Activated T-helper 1 cell treated with anti-CD3 and anti-CD28 coated beads, Interleukin-12 subunit alpha, Interleukin-12 subunit beta, Interleukin-2, Interleukin-4 antibody, amounts not matched to agents 30 ng/mL and 10 ng/mL and 1 ng/mL, durations not matched to agents 14 hours and 24 hours and 36 hours (primary cell): ENCODE measurements at regions of chr3 and their contacts with region 1.

Region 1: DNA sequence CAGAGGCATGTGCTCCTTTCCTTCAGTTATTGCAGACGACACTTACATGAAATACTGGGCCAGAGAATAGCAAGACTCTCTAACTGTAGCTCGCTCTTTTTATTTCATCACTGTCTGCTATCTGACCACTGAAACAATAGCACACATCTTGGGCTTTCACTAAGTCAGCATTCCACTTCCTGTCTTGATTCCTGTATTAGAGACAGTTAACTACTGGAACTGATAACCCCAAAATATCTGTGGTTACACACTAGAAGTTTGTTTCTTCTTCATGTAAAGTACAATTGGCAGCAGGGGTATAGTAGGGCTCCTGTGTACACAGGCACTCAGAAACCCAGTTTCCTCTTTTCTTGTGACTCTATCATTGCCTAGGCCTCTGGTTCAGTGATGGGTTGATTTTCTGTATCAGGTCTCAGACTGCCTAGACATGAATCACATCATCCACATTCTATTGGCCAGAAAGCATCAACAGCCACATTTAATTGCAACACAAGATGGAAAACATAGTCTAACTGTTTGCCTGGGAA is 230.2 kb upstream of the CD96 start:
- DNase-seq: no peak
- H3K4me3 Mint-ChIP-seq: peak overlapping the region; percentile 45
- H3K27ac Mint-ChIP-seq: peak overlapping the region; percentile 92
- H3K4me1 Mint-ChIP-seq: no peaks in the 10 kb centered on the region
- H3K27me3 Mint-ChIP-seq: no peaks in the 10 kb centered on the region

Region 2: DNA sequence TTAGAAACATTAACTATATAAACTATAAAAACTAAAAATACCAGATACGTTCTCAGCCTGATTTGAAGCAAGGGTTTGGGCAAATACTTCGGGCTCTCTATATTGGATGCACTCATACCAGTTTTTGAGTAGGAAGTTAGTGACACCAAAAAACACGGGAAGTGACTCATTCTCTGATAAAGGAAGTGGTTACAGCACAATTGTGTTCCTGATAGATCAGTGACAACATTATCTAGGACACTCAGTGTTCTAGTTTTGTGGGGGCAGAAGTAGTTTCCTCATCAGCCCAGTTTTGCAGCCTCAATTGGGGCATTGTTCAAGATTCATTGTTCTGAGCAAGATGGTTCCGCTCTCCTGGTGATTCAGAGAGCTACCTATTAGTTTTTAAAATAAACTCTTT is 1504.8 kb before region 1 on chr3:
- intact Hi-C with region 1: loop called (anchors 10 kb)
- DNase-seq: peak; percentile 30
- H3K4me3 Mint-ChIP-seq: peak overlapping the region; percentile 35
- H3K27ac Mint-ChIP-seq: peak overlapping the region; percentile 67
- H3K4me1 Mint-ChIP-seq: peaks cover 39% of the 10 kb centered on the region
- H3K27me3 Mint-ChIP-seq: peaks cover 8% of the 10 kb centered on the region

Region 3: DNA sequence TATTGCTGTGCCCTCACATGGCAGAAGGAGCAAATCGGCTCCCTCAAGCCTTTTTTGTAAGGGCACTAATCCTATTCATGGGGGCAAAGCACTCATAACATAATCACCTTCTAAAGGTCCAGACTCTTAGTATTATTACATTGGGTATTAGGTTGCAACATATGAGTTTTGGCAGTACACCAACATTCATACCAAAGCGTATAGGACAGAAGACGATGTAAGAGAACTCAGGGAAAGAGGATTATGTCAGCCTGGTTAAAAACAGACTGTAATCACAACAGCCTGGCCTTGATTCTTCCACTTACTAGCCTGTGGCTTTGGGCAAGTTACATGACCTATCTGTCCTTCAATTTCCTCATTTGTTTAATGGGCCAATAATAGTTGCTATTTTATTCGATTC is 1068.7 kb before region 1 on chr3:
- intact Hi-C with region 1: no loop called
- DNase-seq: no peak
- H3K4me3 Mint-ChIP-seq: no peak overlapping the region
- H3K27ac Mint-ChIP-seq: no peak overlapping the region
- H3K4me1 Mint-ChIP-seq: no peaks in the 10 kb centered on the region
- H3K27me3 Mint-ChIP-seq: no peaks in the 10 kb centered on the region

Region 4: GRCh38 chr3:111238885-111239284 is 72.9 kb before region 1 on chr3:
- intact Hi-C with region 1: loop called (anchors 1 kb)
- DNase-seq: peak; percentile 48
- H3K4me3 Mint-ChIP-seq: peak overlapping the region; percentile 69
- H3K27ac Mint-ChIP-seq: peak overlapping the region; percentile 76
- H3K4me1 Mint-ChIP-seq: peaks cover 49% of the 10 kb centered on the region
- H3K27me3 Mint-ChIP-seq: no peaks in the 10 kb centered on the region

Region 5: GRCh38 chr3:111326144-111326995 is 14.6 kb after region 1 on chr3:
- intact Hi-C with region 1: loop called (anchors 1 kb)
- DNase-seq: no peak
- H3K4me3 Mint-ChIP-seq: no peak overlapping the region
- H3K27ac Mint-ChIP-seq: peak overlapping the region; percentile 38
- H3K4me1 Mint-ChIP-seq: peaks cover 36% of the 10 kb centered on the region
- H3K27me3 Mint-ChIP-seq: no peaks in the 10 kb centered on the region

Region 6: GRCh38 chr3:111571907-111572460 is 260.2 kb after region 1 on chr3:
- intact Hi-C with region 1: no loop called
- DNase-seq: no peak
- H3K4me3 Mint-ChIP-seq: no peak overlapping the region
- H3K27ac Mint-ChIP-seq: peak overlapping the region; percentile 76
- H3K4me1 Mint-ChIP-seq: peaks cover 73% of the 10 kb centered on the region
- H3K27me3 Mint-ChIP-seq: no peaks in the 10 kb centered on the region

Region 7: DNA sequence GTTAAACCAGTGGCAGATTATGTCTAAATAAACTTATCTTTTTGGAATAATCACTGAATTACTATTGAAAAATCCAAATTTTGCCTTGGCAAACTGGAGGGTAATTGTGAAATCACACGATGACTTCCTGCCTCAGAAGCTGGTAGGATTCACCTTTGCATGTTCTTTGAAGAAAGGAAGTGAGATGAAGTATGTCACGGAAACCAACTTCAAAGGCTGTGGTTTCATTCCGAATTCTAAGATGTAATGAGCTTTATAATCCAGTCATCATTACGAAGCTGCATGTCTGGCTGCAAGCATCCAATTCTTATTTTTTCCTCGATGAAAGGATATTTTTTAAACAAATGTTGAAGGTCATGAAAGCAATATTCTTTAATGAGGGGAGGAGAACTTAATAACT is 298.4 kb after region 1 on chr3:
- intact Hi-C with region 1: loop called (anchors 5 kb)
- DNase-seq: peak; percentile 61
- H3K4me3 Mint-ChIP-seq: peak overlapping the region; percentile 69
- H3K27ac Mint-ChIP-seq: peak overlapping the region; percentile 98
- H3K4me1 Mint-ChIP-seq: peaks cover 98% of the 10 kb centered on the region
- H3K27me3 Mint-ChIP-seq: no peaks in the 10 kb centered on the region